HEK293 (cell line): ENCODE measurements at regions of chr9 and their contacts with region 1.

Region 1: GRCh38 chr9:71819115-71819739 is 50.9 kb upstream of the CEMIP2 start:
- H3K4me3 ChIP-seq: no peak overlapping the region
- H3K27ac ChIP-seq: no peak overlapping the region
- H3K4me1 ChIP-seq: no peaks in the 10 kb centered on the region
- CTCF ChIP-seq: no peak

Region 2: GRCh38 chr9:71479621-71480020 is 339.6 kb before region 1 on chr9:
- CTCF ChIA-PET with region 1: no interaction called
- POLR2A ChIA-PET with region 1: no interaction called
- H3K4me3 ChIP-seq: no peak overlapping the region
- H3K27ac ChIP-seq: no peak overlapping the region
- H3K4me1 ChIP-seq: no peaks in the 10 kb centered on the region
- CTCF ChIP-seq: no peak

Region 3: GRCh38 chr9:71835596-71835995 is 16.4 kb after region 1 on chr9:
- CTCF ChIA-PET with region 1: interaction called, 10 read pairs
- POLR2A ChIA-PET with region 1: no interaction called
- H3K4me3 ChIP-seq: no peak overlapping the region
- H3K27ac ChIP-seq: no peak overlapping the region
- H3K4me1 ChIP-seq: no peaks in the 10 kb centered on the region
- CTCF ChIP-seq: no peak